Activated CD8-positive, alpha-beta memory T cell treated with anti-CD3 and anti-CD28 coated beads, Interleukin-2, amount 10 ng/mL, durations not matched to agents 7 days and 5 days (primary cell): ENCODE measurements at regions of chr7 and their contacts with region 1.

Region 1: DNA sequence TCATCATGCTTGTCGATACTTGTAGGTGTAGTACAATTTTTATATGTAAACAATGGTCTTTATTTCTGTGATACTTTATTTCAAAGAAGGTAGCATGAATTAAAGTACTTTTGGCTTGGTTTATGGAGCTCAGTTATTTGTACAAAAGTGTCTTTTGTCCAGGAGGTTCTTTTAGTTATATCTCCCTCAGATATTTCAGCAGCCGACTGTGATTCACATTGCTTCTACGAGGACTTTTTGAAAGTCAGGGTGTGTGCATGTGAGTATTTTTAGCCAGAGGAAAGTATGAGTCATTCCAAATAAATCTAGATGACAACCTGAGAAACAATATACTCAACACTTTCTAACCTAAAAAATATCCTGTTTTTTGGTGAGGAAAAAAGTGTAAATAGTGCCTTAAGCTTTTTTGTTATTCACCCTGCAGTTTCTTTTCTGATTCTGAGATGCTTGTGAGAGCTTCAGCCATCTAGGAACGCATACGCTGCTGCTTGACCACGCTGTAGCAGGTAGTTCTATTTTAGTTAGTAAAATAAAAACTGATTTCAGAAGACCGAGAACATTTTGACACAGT is 595 bp upstream of the SUN1 start:
- DNase-seq: no peak
- ATAC-seq: peak; percentile 61
- H3K4me3 Mint-ChIP-seq: peak overlapping the region; percentile 59
- H3K27ac Mint-ChIP-seq: peak overlapping the region; percentile 85
- H3K4me1 Mint-ChIP-seq: peaks cover 29% of the 10 kb centered on the region
- H3K27me3 Mint-ChIP-seq: no peaks in the 10 kb centered on the region

Region 2: DNA sequence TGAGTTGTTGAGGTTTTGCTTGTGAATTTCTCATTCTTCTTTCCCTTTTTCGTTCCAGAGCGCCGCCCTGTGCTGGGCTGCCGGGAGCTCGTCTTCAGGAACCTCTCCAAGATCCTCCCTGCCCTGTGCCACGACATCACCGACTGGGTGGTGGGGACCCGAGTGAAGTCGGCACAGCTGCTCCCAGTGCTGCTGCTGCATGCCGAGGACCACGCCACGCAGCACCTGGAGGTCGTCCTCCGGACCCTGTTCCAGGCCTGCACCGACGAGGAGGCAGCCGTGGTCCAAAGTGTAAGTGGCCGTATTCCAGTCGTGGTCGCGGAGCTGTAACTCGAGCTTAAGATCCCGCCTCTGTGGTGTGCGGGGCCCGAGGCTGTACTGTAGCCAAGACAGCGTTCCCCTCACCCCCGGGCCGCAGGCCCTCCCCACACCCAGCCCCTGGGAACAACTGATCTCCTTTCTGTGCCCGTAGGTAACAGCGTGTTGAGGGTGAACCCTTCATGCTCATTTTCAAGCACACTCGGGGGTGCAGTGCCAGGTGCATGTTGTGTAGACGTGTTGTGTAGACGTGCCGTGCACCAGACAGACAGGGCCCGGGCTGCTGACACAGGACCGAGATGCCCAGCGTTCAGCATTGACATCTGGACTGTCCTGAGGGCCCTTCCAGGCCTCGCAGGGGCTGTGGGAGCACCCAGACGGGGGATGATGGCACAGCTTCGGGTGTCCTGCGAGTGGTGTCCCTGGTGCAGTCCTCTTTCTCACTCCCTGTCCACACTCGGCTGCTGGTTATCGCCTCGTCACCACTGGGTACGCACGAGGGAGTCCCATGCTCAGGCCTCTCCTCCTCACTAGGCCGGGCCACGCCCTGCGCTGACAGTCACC is 76.9 kb before region 1 on chr7:
- CTCF ChIA-PET with region 1: no interaction called
- DNase-seq: no peak
- ATAC-seq: no peak
- H3K4me3 Mint-ChIP-seq: no peak overlapping the region
- H3K27ac Mint-ChIP-seq: no peak overlapping the region
- H3K4me1 Mint-ChIP-seq: peaks cover 8% of the 10 kb centered on the region
- H3K27me3 Mint-ChIP-seq: no peaks in the 10 kb centered on the region

Region 3: GRCh38 chr7:786472-787255 is 45.0 kb before region 1 on chr7:
- CTCF ChIA-PET with region 1: interaction called, 11 read pairs
- DNase-seq: peak; percentile 69
- ATAC-seq: peak; percentile 80
- H3K4me3 Mint-ChIP-seq: no peak overlapping the region
- H3K27ac Mint-ChIP-seq: no peak overlapping the region
- H3K4me1 Mint-ChIP-seq: peaks cover 2% of the 10 kb centered on the region
- H3K27me3 Mint-ChIP-seq: no peaks in the 10 kb centered on the region

Region 4: DNA sequence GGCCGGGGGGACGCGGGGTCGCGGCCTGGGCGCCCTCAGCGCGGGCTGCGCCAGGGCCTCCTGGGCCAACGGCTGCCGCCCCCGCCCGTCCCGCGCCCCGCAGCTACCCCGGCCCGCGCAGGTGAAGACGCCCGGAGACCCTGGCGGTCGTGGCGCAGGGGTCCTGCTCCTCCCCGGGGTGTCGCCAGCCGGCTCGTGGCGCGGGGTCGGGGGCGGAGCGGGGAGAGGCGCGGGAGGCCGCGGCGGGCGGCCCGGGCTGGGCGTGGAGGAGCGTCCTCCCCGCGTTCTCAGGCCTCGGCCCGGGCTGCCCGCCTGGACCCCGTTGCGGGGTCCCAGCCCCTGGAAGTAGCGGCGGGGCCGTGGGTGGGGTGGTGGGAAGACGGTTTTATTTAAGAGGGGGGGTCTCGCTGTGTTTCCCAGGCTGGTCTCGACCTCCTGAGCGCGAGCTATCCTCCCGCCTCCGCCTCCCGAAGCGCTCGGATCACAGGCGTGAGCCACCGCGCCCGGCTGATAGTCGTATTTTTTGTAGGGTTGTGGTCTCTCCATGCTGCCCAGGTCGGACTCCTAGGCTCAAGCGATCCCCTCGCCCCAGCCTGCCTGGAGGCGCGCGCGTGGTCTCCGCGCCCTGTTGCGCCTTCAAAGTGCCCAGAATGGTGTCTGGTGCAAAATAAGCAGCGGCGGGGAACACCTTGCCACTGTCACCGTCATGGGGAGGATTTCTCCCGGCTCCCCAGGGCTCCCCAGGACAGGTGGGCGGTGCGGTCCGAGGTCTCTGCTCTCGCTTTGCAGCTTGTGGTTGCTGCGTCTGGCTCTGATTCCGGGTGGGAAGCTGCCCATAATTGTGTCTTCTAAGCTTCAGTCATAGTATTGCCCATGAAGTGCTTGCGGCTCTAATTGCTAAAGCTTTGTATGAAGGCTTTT is 14.7 kb before region 1 on chr7:
- CTCF ChIA-PET with region 1: interaction called, 10 read pairs
- DNase-seq: peak; percentile 57
- ATAC-seq: peak; percentile 30
- H3K4me3 Mint-ChIP-seq: peak overlapping the region; percentile 85
- H3K27ac Mint-ChIP-seq: peak overlapping the region; percentile 67
- H3K4me1 Mint-ChIP-seq: peaks cover 46% of the 10 kb centered on the region
- H3K27me3 Mint-ChIP-seq: peaks cover 37% of the 10 kb centered on the region

Region 5: GRCh38 chr7:999149-999879 is 167.6 kb after region 1 on chr7:
- CTCF ChIA-PET with region 1: no interaction called
- DNase-seq: no peak
- ATAC-seq: no peak
- H3K4me3 Mint-ChIP-seq: no peak overlapping the region
- H3K27ac Mint-ChIP-seq: no peak overlapping the region
- H3K4me1 Mint-ChIP-seq: no peaks in the 10 kb centered on the region
- H3K27me3 Mint-ChIP-seq: no peaks in the 10 kb centered on the region

Region 6: DNA sequence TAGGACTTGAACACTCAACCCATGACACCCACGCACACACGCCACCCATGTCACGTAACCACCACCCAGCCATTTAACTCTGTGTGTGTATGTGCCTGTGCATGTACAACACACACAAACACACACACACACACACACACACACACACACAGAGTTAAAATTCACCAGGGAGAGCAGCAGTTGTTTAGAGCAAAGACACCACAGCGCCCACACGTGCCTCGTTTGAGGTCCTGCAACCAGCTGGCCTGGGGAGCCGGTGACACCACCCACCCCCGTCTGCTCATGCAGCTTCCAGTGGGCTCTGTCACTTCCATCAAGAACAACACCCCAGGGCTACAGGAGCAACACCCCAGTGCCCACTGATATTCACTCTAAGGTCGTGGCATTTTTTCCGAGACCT is 935.8 kb after region 1 on chr7:
- CTCF ChIA-PET with region 1: no interaction called
- DNase-seq: no peak
- ATAC-seq: no peak
- H3K4me3 Mint-ChIP-seq: no peak overlapping the region
- H3K27ac Mint-ChIP-seq: no peak overlapping the region
- H3K4me1 Mint-ChIP-seq: no peaks in the 10 kb centered on the region
- H3K27me3 Mint-ChIP-seq: no peaks in the 10 kb centered on the region